A549 (cell line): ENCODE measurements at regions of chr14 and their contacts with region 1.

Region 1: DNA sequence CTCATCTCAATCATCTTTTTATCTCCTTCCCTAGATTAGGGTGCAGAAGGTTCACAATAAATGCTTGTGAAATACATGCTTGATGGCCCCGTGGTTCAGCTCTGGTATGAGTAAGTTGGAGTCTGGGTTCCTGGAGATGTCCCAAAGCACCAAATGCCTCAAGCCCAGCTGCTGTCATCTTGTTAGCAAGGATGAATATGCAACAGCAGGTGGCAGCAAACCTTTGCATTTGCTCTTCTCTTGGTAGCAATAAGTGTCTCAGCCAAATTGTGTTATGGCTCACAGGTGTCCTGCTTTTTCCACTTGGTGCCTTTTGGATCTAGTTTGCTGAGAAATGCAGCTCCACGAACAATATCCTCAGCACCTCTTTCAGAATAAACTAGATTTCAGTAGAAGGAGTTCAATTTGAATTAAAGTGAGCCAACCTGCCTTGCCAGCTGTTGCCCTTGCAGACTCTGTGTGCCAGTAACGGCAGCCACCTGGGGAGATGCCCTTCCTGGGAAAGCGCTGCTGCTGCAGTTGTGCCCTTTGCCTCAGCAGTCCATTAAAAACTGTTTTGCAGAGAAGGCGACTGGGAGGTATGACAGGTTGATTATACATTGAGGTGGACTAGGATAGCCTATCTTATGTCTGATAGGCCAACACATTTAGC is 417.3 kb downstream of the SNAPC1 start:
- DNase-seq: peak; percentile 26 to 72
- ATAC-seq: peak; percentile 88 to 90
- H3K4me3 ChIP-seq: no peak overlapping the region
- H3K27ac ChIP-seq: no peak overlapping the region
- H3K4me1 ChIP-seq: no peaks in the 10 kb centered on the region
- CTCF ChIP-seq: peak; percentile 69
- EP300 ChIP-seq: no peak
- POLR2A ChIP-seq: no peak
- RAD21 ChIP-seq: peak; percentile 82 to 86

Region 2: DNA sequence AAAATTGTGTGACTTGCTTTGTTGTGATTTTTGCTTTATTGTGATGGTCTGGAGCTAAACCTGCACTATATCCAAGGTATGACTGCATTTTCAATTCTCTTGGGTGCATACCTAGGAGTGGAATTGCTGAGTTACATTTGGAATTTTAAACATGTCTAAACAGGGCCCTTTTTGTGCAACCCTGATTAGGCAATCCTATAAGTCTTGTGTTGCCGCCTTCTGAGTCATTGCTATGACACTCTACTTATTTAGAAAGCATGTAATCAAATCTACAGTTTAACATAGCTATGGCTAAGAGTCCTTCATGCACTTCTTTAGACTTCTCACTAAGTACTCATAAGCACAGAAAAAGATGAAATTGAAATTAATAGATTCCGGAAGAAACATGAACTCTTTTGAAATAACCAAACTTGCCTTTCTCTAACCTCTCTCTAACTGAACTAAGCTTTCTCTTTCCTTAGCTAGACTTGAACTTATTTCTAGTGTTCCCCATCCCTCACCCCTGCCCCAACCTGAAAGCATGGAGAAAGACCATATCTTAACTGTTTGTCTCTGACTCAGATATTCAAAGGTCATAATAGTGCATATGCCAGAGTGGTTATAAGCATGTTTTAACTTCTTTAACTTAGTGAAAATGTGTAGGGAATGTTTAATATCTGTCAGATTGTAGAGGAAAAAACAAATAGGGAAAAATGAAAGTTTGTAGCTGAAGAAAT is 214.3 kb before region 1 on chr14:
- CTCF ChIA-PET with region 1: no interaction called
- POLR2A ChIA-PET with region 1: no interaction called
- DNase-seq: peak in 1 of 2 experiments; percentile 33
- ATAC-seq: no peak
- H3K4me3 ChIP-seq: no peak overlapping the region
- H3K27ac ChIP-seq: no peak overlapping the region
- H3K4me1 ChIP-seq: no peaks in the 10 kb centered on the region; the same call in 2 of the 3 replicates
- CTCF ChIP-seq: no peak
- EP300 ChIP-seq: no peak
- POLR2A ChIP-seq: no peak
- RAD21 ChIP-seq: no peak

Region 3: DNA sequence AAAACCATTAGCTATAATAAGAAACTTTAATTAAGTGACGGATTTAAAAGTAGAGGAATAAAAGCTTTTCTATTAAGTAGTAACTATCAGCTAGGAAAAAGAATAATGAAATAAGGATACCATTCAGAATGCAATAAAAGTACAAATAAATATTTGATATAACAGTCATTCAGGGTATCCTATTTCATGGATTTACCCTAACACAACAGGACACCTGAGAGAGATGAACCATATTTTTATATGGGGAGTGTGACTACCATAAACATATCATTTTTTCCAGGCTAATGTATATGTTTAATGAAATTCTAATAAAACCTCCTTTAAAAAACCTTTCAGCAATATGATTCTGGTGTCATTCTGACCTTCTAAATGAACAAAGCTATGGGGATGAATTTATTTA is 23.4 kb before region 1 on chr14:
- CTCF ChIA-PET with region 1: no interaction called
- POLR2A ChIA-PET with region 1: no interaction called
- DNase-seq: no peak
- ATAC-seq: no peak
- H3K4me3 ChIP-seq: no peak overlapping the region
- H3K27ac ChIP-seq: no peak overlapping the region
- H3K4me1 ChIP-seq: no peaks in the 10 kb centered on the region
- CTCF ChIP-seq: no peak
- EP300 ChIP-seq: no peak
- POLR2A ChIP-seq: no peak
- RAD21 ChIP-seq: no peak

Region 4: GRCh38 chr14:62301911-62302310 is 122.4 kb after region 1 on chr14:
- CTCF ChIA-PET with region 1: no interaction called
- POLR2A ChIA-PET with region 1: no interaction called
- DNase-seq: no peak
- ATAC-seq: no peak
- H3K4me3 ChIP-seq: no peak overlapping the region
- H3K27ac ChIP-seq: no peak overlapping the region
- H3K4me1 ChIP-seq: no peaks in the 10 kb centered on the region
- CTCF ChIP-seq: no peak
- EP300 ChIP-seq: no peak
- POLR2A ChIP-seq: no peak
- RAD21 ChIP-seq: no peak

Region 5: DNA sequence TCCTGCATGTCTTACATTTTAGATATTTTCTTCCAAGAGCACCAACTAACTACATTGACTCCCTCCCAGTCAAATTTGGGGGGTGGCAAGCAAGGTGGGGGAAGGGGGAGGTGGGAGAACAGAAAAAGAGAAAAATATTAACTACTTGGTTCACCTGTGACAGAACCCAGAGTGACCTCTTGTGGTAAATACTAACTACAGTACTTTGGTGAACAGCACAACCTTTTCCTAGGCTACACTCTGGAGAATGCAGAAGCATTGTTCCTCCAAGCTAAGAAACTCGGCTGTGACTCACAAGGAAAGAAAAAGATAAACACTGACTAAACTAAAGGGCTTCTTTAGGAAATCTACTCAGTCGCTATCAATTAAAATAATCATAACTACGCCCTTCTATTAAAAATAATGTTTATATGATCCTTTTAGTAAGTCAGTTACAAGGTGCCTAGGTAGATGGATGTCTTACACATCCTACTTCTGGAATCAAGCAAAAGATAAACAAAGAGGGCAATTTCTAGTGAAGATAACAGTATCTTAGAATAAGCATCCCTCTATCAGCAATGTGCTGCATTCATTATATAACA is 860.4 kb after region 1 on chr14:
- CTCF ChIA-PET with region 1: interaction called, 25 read pairs
- POLR2A ChIA-PET with region 1: no interaction called
- DNase-seq: peak in 1 of 2 experiments; percentile 56
- ATAC-seq: peak; percentile 84 to 89
- H3K4me3 ChIP-seq: no peak overlapping the region
- H3K27ac ChIP-seq: no peak overlapping the region
- H3K4me1 ChIP-seq: no peaks in the 10 kb centered on the region
- CTCF ChIP-seq: peak; percentile 72
- EP300 ChIP-seq: no peak
- POLR2A ChIP-seq: no peak
- RAD21 ChIP-seq: peak; percentile 67 to 85